SK-N-SH (cell line): ENCODE measurements at regions of chr13 and their contacts with region 1.

Region 1: DNA sequence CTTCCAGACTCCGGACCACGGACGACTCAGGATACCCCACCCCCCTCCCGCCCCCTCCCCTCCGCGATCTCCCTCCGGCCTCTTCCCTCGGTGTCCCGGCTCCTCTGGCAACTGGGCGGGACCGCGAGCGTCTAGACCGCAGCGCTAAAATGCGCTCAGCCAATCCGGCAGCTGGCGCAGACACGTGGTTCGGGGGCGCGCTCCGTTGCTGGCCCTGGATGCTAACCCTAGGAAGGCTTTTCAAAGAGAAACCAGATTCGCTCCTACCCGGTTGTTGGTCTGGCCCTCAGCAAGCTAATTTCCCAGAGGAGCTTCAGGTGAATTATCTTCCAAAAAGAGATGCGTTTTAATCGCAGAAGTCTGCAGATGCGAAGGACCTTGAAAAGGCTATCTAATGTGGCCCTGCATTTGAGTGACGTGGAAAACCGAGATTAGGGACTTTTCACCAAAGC is at the start of gene DZIP1:
- DNase-seq: peak; percentile 90
- H3K4me3 ChIP-seq: peak within 1 kb of the TSS; percentile 79 to 85
- H3K27ac ChIP-seq: peak within 1 kb of the TSS; percentile 64 to 90
- H3K4me1 ChIP-seq: peaks cover 0 to 21% of the 10 kb centered on the region in 2 experiments; a peak in 2 of 4 replicates
- H3K27me3 ChIP-seq: no peaks in the 10 kb centered on the region
- CTCF ChIP-seq: no peak
- EP300 ChIP-seq: peak in 1 of 2 experiments; percentile 14; a peak in 1 of 4 replicates
- RAD21 ChIP-seq: no peak
- polyA plus RNA-seq, gene DZIP1: 15.0 and 15.2 TPM in 2 replicates

Region 2: GRCh38 chr13:95624020-95624419 is 20.6 kb before region 1 on chr13:
- CTCF ChIA-PET with region 1: interaction called, 13 read pairs
- POLR2A ChIA-PET with region 1: no interaction called
- DNase-seq: peak; percentile 52
- H3K4me3 ChIP-seq: no peak overlapping the region
- H3K27ac ChIP-seq: no peak overlapping the region
- H3K4me1 ChIP-seq: no peaks in the 10 kb centered on the region
- H3K27me3 ChIP-seq: no peaks in the 10 kb centered on the region
- CTCF ChIP-seq: peak; percentile 80
- EP300 ChIP-seq: no peak
- RAD21 ChIP-seq: peak; percentile 88